Heart right ventricle (tissue), 16 donors: ENCODE measurements at regions of chr6 and their contacts with region 1.

Region 1: GRCh38 chr6:26003102-26003694 is 40.6 kb downstream of the TRIM38 start:
- DNase-seq: peak; percentile 17 to 73
- ATAC-seq: peak in 7 of 8 donors; percentile 33 to 70 (median 61)
- H3K4me3 ChIP-seq: no peak overlapping the region
- H3K27ac ChIP-seq: no peak overlapping the region
- H3K4me1 ChIP-seq: peaks cover 0 to 10% (median 0%) of the 10 kb centered on the region in 9 donors
- H3K27me3 ChIP-seq: no peaks in the 10 kb centered on the region
- CTCF ChIP-seq: peak; percentile 66 to 89 (median 82)

Region 2: GRCh38 chr6:25793970-25794369 is 209.2 kb before region 1 on chr6:
- intact Hi-C with region 1: loop called in 4 of 10 experiments (anchors 5 kb)
- DNase-seq: no peak
- ATAC-seq: no peak
- H3K4me3 ChIP-seq: no peak overlapping the region
- H3K27ac ChIP-seq: no peak overlapping the region
- H3K4me1 ChIP-seq: no peaks in the 10 kb centered on the region
- H3K27me3 ChIP-seq: no peaks in the 10 kb centered on the region
- CTCF ChIP-seq: no peak